Stomach (tissue), 19 donors: ENCODE measurements at regions of chrX and their contacts with region 1.

Region 1: DNA sequence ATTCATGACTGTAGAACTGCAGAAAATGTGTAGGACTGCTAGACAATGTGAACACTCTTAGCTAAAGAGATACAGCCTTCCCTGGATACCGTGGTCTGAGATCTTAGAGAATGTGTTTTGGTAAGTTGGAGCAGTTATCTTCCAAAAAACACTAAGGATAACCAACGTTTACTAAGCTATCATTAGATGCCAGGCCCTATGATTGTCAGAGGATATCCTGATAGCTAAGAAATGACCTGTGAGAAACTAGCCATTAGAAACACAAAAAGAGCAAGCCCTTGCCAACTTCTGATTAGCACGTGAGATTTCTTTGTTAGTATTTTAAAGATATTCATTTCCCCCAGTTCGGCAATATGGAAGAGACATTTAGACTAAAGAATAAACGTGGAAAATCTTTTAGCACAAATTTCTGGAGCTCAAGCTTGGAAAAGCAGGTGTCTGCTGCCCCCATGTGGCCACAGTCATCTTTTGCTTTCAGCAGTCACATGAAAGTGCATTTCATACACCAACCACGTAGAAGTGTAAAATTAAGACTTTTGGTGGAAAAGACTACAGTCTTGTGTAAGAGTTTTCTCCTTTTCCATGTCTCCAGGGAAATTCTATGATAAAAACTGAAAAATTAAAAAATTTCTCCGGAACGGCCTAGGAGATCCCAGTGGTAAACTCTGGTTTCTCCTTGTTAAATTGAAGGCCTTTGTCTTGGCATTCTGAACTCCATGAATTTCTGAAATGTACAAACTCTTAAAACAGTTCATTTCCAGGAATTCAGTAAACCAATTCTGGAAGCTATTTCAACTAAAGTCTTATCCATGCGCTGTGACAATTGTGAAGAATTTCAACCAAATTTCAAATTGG is 136.4 kb downstream of the ZNF674 start:
- DNase-seq: peak; percentile 76 to 89
- H3K4me3 ChIP-seq: no peak overlapping the region
- H3K27ac ChIP-seq: no peak overlapping the region
- H3K4me1 ChIP-seq: no peaks in the 10 kb centered on the region
- H3K27me3 ChIP-seq: no peaks in the 10 kb centered on the region
- CTCF ChIP-seq: peak in 5 of 7 experiments; percentile 46 to 78 (median 63)
- EP300 ChIP-seq: no peak
- POLR2A ChIP-seq: no peak

Region 2: GRCh38 chrX:45322382-45322781 is 1086.4 kb before region 1 on chrX:
- intact Hi-C with region 1: loop called (anchors 10 kb)
- DNase-seq: peak; percentile 44 to 81
- H3K4me3 ChIP-seq: no peak overlapping the region
- H3K27ac ChIP-seq: no peak overlapping the region
- H3K4me1 ChIP-seq: no peaks in the 10 kb centered on the region
- H3K27me3 ChIP-seq: peaks cover 0 to 7% (median 0%) of the 10 kb centered on the region in 3 donors
- CTCF ChIP-seq: peak in 2 of 7 experiments; percentile 12 to 45
- EP300 ChIP-seq: no peak
- POLR2A ChIP-seq: no peak

Region 3: GRCh38 chrX:46260513-46260912 is 148.3 kb before region 1 on chrX:
- intact Hi-C with region 1: no loop called
- DNase-seq: no peak
- H3K4me3 ChIP-seq: no peak overlapping the region
- H3K27ac ChIP-seq: peak overlapping the region in 1 of 5 donors; percentile 10
- H3K4me1 ChIP-seq: no peaks in the 10 kb centered on the region
- H3K27me3 ChIP-seq: no peaks in the 10 kb centered on the region
- CTCF ChIP-seq: no peak
- EP300 ChIP-seq: no peak
- POLR2A ChIP-seq: no peak